ENCODE measurements at regions of chr11 and their contacts with region 1.

Region 1: GRCh38 chr11:36233204-36233603 is 56.0 kb downstream of the COMMD9 start:
- DNase-seq: no peak
- H3K4me3 Mint-ChIP-seq: no peak overlapping the region
- H3K27ac Mint-ChIP-seq: no peak overlapping the region
- H3K4me1 Mint-ChIP-seq: no peaks in the 10 kb centered on the region
- H3K27me3 Mint-ChIP-seq: no peaks in the 10 kb centered on the region
- CTCF ChIP-seq: no peak

Region 2: GRCh38 chr11:36249246-36249645 is 16.0 kb after region 1 on chr11:
- CTCF ChIA-PET with region 1: interaction called, 3 read pairs
- POLR2A ChIA-PET with region 1: interaction called, 16 read pairs
- intact Hi-C with region 1: no loop called
- DNase-seq: peak; percentile 89
- H3K4me3 Mint-ChIP-seq: no peak overlapping the region
- H3K27ac Mint-ChIP-seq: peak overlapping the region; percentile 77
- H3K4me1 Mint-ChIP-seq: peaks cover 21% of the 10 kb centered on the region
- H3K27me3 Mint-ChIP-seq: no peaks in the 10 kb centered on the region
- CTCF ChIP-seq: no peak